OCI-LY7 (cell line): ENCODE measurements at regions of chr4 and their contacts with region 1.

Region 1: GRCh38 chr4:84503495-84504437 is 4.7 kb upstream of the NKX6-1 start:
- DNase-seq: peak; percentile 63
- H3K4me3 ChIP-seq: no peak overlapping the region
- H3K27ac ChIP-seq: no peak overlapping the region
- H3K4me1 ChIP-seq: no peaks in the 10 kb centered on the region
- CTCF ChIP-seq: peak; percentile 80

Region 2: GRCh38 chr4:83905952-83906351 is 597.8 kb before region 1 on chr4:
- CTCF ChIA-PET with region 1: no interaction called
- POLR2A ChIA-PET with region 1: no interaction called
- intact Hi-C with region 1: loop called (anchors 10 kb)
- DNase-seq: peak; percentile 5
- H3K4me3 ChIP-seq: no peak overlapping the region
- H3K27ac ChIP-seq: no peak overlapping the region
- H3K4me1 ChIP-seq: no peaks in the 10 kb centered on the region
- CTCF ChIP-seq: peak; percentile 72

Region 3: DNA sequence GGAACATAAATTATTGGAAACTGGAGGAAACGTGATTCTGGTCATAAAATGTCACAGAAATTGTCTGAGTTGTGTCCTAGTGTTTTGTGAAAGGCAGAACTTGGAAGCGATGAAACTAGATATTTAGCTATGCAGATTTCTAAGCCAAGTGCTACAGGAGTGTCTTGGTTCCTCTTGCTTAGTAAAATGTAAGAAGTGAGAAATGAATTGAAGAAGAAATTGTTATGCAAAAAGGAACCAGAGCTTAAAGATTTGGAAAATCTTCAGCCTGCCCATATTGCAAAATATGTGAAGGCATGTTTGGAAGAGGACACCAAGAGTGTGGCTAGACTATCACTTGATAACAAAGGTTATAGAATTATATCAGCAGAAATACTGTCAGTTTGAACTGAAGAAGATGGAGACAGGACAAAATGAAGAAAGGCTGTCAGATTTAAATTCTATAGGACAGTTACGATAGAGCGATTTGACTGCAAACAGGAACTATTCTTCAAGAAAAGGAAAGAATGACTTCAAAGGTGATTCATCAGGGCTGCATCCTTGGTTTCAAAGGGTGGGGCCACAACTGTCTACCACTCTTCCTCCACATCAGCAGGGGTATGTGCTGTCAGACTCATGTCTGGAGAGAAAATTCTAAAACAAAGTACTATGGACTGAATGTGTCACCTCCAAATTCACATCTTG is 69.8 kb after region 1 on chr4:
- CTCF ChIA-PET with region 1: no interaction called
- POLR2A ChIA-PET with region 1: no interaction called
- intact Hi-C with region 1: no loop called
- DNase-seq: no peak
- H3K4me3 ChIP-seq: no peak overlapping the region
- H3K27ac ChIP-seq: no peak overlapping the region
- H3K4me1 ChIP-seq: no peaks in the 10 kb centered on the region
- CTCF ChIP-seq: no peak